ENCODE measurements at regions of chr12 and their contacts with region 1.

Region 1: DNA sequence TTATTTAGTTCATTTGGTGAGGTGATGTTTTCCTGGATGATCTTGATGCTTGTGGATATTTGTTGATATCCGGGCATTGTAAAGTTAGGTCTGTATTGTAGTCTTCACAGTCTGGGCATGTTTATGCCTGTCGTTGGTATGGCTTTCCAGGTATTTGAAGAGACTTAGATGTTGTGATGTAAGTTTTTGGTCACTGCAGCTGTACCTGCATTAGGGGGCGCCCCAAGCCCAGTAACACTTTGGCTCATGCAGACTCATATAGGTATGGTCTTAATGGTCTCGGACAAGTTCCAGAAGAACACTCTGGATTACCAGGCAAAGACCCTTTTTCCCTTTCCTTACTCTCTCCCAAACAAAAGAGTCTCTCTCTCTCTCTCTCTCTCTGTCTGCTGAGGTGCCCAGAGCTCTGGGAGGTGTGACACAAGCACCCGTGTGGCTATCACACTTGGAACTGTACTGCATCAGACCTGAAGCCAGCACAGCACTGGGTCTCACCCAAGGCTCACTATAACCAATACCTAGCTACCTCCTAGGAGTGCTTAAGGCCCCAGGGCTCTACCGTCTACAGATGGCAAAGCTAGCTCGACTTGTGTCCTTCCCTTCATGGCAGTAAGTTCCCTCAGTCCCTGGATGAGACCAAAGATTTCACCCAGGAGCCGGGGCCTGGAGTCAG is 425.8 kb upstream of the ATXN7L3B start:
- DNase-seq: peak in 1 of 5 donors; percentile 26
- ATAC-seq: peak in 1 of 4 donors; percentile 52
- H3K4me3 ChIP-seq: no peak overlapping the region
- H3K27ac ChIP-seq: no peak overlapping the region
- H3K4me1 ChIP-seq: no peaks in the 10 kb centered on the region
- H3K27me3 ChIP-seq: no peaks in the 10 kb centered on the region
- CTCF ChIP-seq: peak in 5 of 12 donors; percentile 19 to 48 (median 31)
- POLR2A ChIP-seq: no peak

Region 2: GRCh38 chr12:74317078-74317601 is 205.3 kb after region 1 on chr12:
- intact Hi-C with region 1: loop called in 2 of 10 experiments (anchors 5 to 10 kb)
- DNase-seq: peak in 3 of 5 donors; percentile 21 to 57 (median 32)
- ATAC-seq: peak; percentile 80 to 92 (median 84)
- H3K4me3 ChIP-seq: no peak overlapping the region
- H3K27ac ChIP-seq: no peak overlapping the region
- H3K4me1 ChIP-seq: no peaks in the 10 kb centered on the region
- H3K27me3 ChIP-seq: no peaks in the 10 kb centered on the region
- CTCF ChIP-seq: peak in 8 of 12 donors; percentile 10 to 55 (median 35)
- POLR2A ChIP-seq: no peak

Region 3: GRCh38 chr12:74415633-74416032 is 303.8 kb after region 1 on chr12:
- intact Hi-C with region 1: loop called in 2 of 10 experiments (anchors 10 kb)
- DNase-seq: no peak
- ATAC-seq: no peak
- H3K4me3 ChIP-seq: no peak overlapping the region
- H3K27ac ChIP-seq: no peak overlapping the region
- H3K4me1 ChIP-seq: no peaks in the 10 kb centered on the region
- H3K27me3 ChIP-seq: peaks cover 0 to 3% (median 0%) of the 10 kb centered on the region in 9 donors
- CTCF ChIP-seq: peak in 10 of 12 donors; percentile 6 to 43 (median 26)
- POLR2A ChIP-seq: no peak

Measured in heart left ventricle (tissue), 16 donors.